ENCODE measurements at regions of chr2 and their contacts with region 1.

Region 1: DNA sequence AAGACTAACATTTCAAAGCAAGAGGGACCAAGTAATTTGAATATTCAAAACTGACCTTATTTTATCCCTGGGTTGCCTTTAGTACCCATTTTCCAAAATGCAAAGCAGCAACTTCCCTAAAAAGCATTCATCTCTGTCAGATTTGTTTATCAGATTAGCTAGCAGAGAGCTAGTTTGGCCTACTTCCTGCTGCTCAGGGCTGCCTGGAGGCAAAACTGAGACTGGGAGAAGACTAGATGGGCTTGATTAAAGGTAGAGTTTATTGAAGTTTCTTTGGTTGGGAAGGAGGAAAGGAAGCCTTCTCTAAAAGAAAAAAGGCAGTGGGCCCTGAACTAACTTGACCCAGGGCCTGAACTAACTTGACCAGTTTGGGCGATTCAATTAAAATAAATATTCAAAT is 426.1 kb upstream of the FAM98A start:
- DNase-seq: no peak
- H3K4me3 ChIP-seq: no peak overlapping the region
- H3K27ac ChIP-seq: no peak overlapping the region
- H3K4me1 ChIP-seq: no peaks in the 10 kb centered on the region
- H3K27me3 ChIP-seq: no peaks in the 10 kb centered on the region
- CTCF ChIP-seq: no peak
- EP300 ChIP-seq: no peak
- RAD21 ChIP-seq: no peak

Region 2: DNA sequence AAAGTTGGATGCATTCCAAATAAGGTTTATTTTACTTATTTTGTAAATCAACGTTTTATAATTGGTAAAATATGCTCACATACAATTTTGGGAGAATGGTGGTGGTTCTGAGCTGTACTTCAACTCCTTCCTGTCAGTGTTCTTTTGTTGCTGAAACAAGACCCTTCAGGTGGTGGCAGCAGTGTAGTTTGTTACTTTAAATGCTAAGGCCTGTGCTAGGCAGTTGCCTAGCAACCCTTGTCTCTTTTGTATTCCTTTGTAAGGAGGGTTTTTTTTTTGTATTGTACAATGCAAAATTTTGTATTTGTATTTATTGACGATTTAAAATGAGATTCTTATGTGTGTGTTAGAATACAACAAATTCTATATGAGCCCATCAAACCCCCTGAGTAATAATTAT is 260.1 kb before region 1 on chr2:
- CTCF ChIA-PET with region 1: no interaction called
- POLR2A ChIA-PET with region 1: no interaction called
- DNase-seq: no peak
- H3K4me3 ChIP-seq: no peak overlapping the region
- H3K27ac ChIP-seq: no peak overlapping the region
- H3K4me1 ChIP-seq: no peaks in the 10 kb centered on the region
- H3K27me3 ChIP-seq: no peaks in the 10 kb centered on the region
- CTCF ChIP-seq: no peak
- EP300 ChIP-seq: no peak
- RAD21 ChIP-seq: no peak

Region 3: GRCh38 chr2:34012715-34013302 is 12.4 kb before region 1 on chr2:
- CTCF ChIA-PET with region 1: interaction called, 15 read pairs
- POLR2A ChIA-PET with region 1: no interaction called
- DNase-seq: peak; percentile 52
- H3K4me3 ChIP-seq: peak overlapping the region in 1 of 2 experiments; percentile 30; a peak in 1 of 4 replicates
- H3K27ac ChIP-seq: no peak overlapping the region
- H3K4me1 ChIP-seq: no peaks in the 10 kb centered on the region
- H3K27me3 ChIP-seq: no peaks in the 10 kb centered on the region
- CTCF ChIP-seq: peak; percentile 76
- EP300 ChIP-seq: no peak
- RAD21 ChIP-seq: peak; percentile 79

Region 4: DNA sequence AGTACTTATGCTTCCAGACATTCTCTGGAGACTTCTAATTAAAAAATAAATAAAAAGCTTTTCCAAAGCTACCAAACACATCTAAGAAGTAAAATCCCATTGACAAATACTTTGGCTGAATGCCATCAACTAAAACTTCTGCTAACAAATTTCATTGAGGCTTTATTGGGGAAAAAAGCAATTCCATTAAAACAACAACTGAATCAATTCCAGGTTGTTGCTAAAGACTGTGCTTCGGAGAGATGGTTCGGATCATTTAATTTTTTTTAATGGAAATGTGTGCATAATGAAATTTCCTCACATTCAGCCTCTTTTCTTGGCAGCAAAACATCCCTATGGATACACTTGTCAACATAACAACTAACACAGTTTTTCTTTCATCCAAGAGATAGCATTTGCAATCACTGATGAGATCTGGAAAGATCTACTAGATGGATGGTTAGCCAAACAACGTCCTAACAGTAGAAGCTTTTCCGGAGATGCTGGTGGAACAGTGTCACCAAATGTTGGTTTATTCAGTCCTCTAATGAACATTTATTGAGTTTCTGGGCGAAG is 20.0 kb after region 1 on chr2:
- CTCF ChIA-PET with region 1: no interaction called
- POLR2A ChIA-PET with region 1: no interaction called
- DNase-seq: no peak
- H3K4me3 ChIP-seq: no peak overlapping the region
- H3K27ac ChIP-seq: no peak overlapping the region
- H3K4me1 ChIP-seq: no peaks in the 10 kb centered on the region
- H3K27me3 ChIP-seq: no peaks in the 10 kb centered on the region
- CTCF ChIP-seq: no peak
- EP300 ChIP-seq: no peak
- RAD21 ChIP-seq: no peak

Measured in SK-N-SH (cell line).